H1 (cell line): ENCODE measurements at regions of chr6 and their contacts with region 1.

Region 1: GRCh38 chr6:44221291-44221960 is 2.0 kb upstream of the SLC29A1 start:
- DNase-seq: peak in 1 of 2 experiments; percentile 74
- H3K4me3 ChIP-seq: no peak overlapping the region; a peak in 1 of 8 replicates
- H3K27ac ChIP-seq: no peak overlapping the region
- H3K4me1 ChIP-seq: peaks cover 33 to 61% (median 45%) of the 10 kb centered on the region in 4 experiments
- H3K27me3 ChIP-seq: no peaks in the 10 kb centered on the region
- CTCF ChIP-seq: peak in 2 of 3 experiments; percentile 67 to 71; a peak in 3 of 4 replicates
- EP300 ChIP-seq: no peak
- POLR2A ChIP-seq: no peak
- RAD21 ChIP-seq: peak; percentile 28 to 60

Region 2: DNA sequence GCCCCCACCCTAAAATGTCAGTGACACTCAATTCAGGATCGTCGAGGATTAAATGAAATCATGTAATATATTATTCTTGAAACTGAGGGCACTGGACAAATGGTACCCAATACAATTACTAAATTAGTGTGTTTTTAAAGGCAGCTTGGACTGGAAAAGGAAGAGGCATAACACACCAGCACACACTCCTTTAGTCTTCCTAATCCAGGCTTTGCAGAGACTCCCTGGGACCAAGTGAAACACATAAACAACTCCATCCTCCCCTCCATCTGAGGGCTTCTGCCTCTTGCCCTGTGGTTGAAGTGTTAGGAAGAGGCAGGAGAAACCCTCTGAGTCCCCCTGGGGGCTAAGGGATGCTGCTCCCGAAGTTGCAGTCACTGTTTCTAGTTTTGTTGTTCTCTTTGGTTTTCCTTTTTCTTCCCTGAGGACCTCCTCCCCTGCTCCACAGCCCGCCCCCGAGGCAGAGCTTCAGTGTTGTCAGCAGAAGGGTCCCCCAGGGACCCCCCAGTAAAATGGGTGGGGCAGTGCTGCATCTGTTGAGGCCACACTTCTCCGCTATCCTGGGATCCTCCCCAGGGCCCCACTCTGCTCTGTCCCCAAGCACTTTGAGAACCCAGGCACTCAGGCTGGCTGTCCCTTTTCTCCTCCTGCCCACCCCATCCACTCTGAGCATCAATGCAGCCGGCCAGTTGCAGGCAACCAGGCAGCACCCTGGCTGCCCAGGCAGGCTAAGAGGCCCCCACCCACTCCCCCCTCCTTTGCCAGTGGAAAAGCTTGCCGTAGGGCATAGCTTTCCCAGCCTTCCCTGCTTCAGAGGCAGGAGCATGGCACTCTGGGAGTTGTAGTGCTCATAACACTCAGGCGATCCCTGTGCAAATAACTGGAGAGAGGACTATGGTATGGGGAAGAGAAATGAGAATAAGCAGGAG is 88.2 kb before region 1 on chr6:
- CTCF ChIA-PET with region 1: interaction called, 15 read pairs
- POLR2A ChIA-PET with region 1: interaction called, 3 read pairs
- DNase-seq: no peak
- H3K4me3 ChIP-seq: peak overlapping the region in 1 of 4 experiments; percentile 30; a peak in 1 of 8 replicates
- H3K27ac ChIP-seq: no peak overlapping the region
- H3K4me1 ChIP-seq: peaks cover 8 to 20% (median 15%) of the 10 kb centered on the region in 4 experiments
- H3K27me3 ChIP-seq: no peaks in the 10 kb centered on the region
- CTCF ChIP-seq: 0 out of 4 replicates have a peak, but pooled peaks of 1 of the 3 experiments have one; percentile 10
- EP300 ChIP-seq: no peak
- POLR2A ChIP-seq: no peak
- RAD21 ChIP-seq: 0 out of 4 replicates have a peak, but pooled peaks of 1 of the 2 experiments have one; percentile 12

Region 3: DNA sequence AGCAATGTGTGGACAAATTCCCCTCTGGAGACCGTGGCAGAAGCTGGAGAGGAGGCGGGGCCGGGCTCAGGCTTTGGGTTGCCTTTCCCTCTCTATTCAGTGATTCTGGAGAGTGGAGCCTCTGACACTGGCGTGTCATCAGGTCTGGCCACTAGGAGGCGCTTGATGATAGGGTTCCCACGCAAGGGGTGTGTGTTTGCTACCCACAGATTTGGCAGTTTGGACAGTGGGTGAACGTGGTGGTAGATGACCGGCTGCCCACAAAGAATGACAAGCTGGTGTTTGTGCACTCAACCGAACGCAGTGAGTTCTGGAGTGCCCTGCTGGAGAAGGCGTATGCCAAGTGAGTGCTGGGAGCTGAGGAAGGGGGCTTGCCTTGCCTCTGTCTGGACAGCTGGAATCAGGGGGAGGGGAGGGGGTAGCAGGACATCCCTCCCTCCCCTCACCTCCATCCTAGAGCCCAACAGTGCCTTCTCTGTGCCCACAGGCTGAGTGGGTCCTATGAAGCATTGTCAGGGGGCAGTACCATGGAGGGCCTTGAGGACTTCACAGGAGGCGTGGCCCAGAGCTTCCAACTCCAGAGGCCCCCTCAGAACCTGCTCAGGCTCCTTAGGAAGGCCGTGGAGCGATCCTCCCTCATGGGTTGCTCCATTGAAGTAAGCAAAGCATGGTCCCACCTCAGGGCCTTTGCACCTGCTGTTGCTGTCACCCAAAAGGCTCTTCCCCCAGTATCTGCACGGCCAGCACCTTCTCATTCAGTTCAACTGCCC is 48.5 kb before region 1 on chr6:
- CTCF ChIA-PET with region 1: interaction called, 287 read pairs
- POLR2A ChIA-PET with region 1: interaction called, 15 read pairs
- DNase-seq: peak in 1 of 2 experiments; percentile 91
- H3K4me3 ChIP-seq: no peak overlapping the region
- H3K27ac ChIP-seq: no peak overlapping the region
- H3K4me1 ChIP-seq: peaks cover 0 to 12% (median 3%) of the 10 kb centered on the region in 4 experiments; a peak in 6 of 7 replicates
- H3K27me3 ChIP-seq: no peaks in the 10 kb centered on the region
- CTCF ChIP-seq: peak; percentile 89 to 94 (median 90)
- EP300 ChIP-seq: no peak
- POLR2A ChIP-seq: no peak
- RAD21 ChIP-seq: peak; percentile 93 to 94

Region 4: DNA sequence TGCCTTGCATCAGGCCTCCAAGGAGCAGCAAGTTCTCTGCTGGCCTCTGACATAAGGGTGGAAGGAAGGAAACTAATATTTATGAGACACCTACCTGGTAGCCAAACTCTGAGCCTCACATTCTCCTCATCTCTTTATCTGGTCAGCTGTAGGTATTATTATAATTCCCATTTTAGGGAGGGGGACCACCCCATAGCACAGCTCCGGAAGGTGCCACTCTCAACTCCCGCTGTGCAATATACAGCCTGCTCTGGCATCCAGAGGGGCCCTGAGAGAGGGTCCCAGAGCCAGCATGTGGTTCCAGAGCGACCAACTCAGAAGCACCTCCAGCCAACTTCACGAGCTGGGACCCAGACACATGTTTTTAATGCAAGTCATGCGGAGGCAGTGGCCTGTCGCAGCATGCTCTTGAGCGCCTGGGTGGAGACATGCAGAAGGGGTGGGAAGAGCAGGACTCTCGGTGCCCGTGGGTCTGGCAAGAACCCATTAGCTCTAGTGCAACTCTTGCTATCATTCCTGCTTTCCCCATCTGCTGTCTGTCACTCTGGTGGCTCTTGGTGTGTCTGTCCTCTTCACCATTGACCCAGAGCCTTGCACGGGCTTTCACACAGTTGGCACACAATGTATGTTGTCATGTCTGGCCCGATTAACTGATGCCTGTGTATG is 19.7 kb before region 1 on chr6:
- CTCF ChIA-PET with region 1: interaction called, 11 read pairs
- POLR2A ChIA-PET with region 1: interaction called, 46 read pairs
- DNase-seq: no peak
- H3K4me3 ChIP-seq: no peak overlapping the region; a peak in 1 of 8 replicates
- H3K27ac ChIP-seq: peak overlapping the region; percentile 93
- H3K4me1 ChIP-seq: peaks cover 20 to 30% (median 28%) of the 10 kb centered on the region in 4 experiments
- H3K27me3 ChIP-seq: no peaks in the 10 kb centered on the region
- CTCF ChIP-seq: no peak
- EP300 ChIP-seq: no peak
- POLR2A ChIP-seq: no peak
- RAD21 ChIP-seq: no peak

Region 5: GRCh38 chr6:44251576-44252524 is 30.4 kb after region 1 on chr6:
- CTCF ChIA-PET with region 1: interaction called, 40 read pairs
- POLR2A ChIA-PET with region 1: interaction called, 477 read pairs
- DNase-seq: no peak
- H3K4me3 ChIP-seq: no peak overlapping the region
- H3K27ac ChIP-seq: no peak overlapping the region
- H3K4me1 ChIP-seq: peaks cover 7 to 17% (median 8%) of the 10 kb centered on the region in 4 experiments; a peak in 6 of 7 replicates
- H3K27me3 ChIP-seq: no peaks in the 10 kb centered on the region
- CTCF ChIP-seq: no peak
- EP300 ChIP-seq: no peak
- POLR2A ChIP-seq: peak; percentile 38 to 84
- RAD21 ChIP-seq: no peak